ENCODE measurements at regions of chr7 and their contacts with region 1.

Region 1: DNA sequence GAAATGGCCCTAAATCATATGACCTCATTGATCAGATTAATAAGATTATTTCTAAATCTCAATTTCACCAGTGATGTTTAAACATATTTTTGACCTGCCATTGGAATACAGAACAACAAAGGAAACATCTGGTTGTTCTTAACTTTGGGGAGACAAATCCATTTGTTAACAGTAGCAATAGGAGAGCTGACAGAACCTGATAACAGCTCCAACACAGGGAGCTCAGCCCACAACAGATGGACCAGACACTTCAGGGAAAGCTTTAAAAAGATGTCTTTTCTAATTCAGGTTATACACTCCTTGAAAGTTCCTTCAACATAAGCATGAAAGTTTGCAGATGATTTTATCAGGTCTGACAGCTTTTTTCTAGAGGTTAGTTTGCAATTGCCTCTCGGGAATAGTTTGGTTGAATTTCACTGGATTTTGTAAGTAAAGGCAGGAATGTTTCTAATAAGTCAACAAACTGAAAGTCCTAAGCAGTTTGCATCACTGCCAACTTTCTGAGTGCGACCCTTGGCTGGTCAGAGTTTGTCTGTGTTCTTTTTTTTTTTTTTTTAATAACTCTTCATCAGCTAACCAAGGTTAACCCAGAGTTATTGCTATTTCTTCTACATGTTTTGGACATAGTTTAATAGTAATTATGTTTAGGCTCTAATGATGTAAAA is 6.5 kb upstream of the MET start:
- DNase-seq: no peak
- ATAC-seq: no peak
- H3K4me3 ChIP-seq: no peak overlapping the region
- H3K27ac ChIP-seq: no peak overlapping the region
- H3K4me1 ChIP-seq: no peaks in the 10 kb centered on the region
- H3K27me3 ChIP-seq: no peaks in the 10 kb centered on the region
- CTCF ChIP-seq: no peak

Region 2: DNA sequence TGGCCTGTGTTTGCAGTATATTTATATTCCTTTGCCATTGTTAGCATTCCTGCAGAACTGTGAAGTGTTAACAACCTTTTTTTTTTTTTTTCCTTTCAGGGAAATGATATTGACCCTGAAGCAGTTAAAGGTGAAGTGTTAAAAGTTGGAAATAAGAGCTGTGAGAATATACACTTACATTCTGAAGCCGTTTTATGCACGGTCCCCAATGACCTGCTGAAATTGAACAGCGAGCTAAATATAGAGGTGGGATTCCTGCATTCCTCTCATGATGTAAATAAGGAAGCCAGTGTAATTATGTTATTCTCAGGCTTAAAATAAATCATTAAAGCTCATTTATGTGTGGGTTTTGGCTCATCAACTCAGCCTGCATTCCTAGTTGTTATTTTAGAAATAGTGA is 104.1 kb after region 1 on chr7:
- CTCF ChIA-PET with region 1: no interaction called
- POLR2A ChIA-PET with region 1: interaction called, 10 read pairs
- in situ Hi-C with region 1: no loop called
- intact Hi-C with region 1: no loop called
- DNase-seq: no peak
- ATAC-seq: no peak
- H3K4me3 ChIP-seq: no peak overlapping the region
- H3K27ac ChIP-seq: no peak overlapping the region
- H3K4me1 ChIP-seq: no peaks in the 10 kb centered on the region; the same call in 1 of the 2 replicates
- H3K27me3 ChIP-seq: no peaks in the 10 kb centered on the region
- CTCF ChIP-seq: no peak